Activated B cell treated with CpG ODN at 0.5 μM for 24 hours (primary cell): ENCODE measurements at regions of chr19 and their contacts with region 1.

Region 1: GRCh38 chr19:4576016-4576933 is 16.8 kb upstream of the SEMA6B start:
- DNase-seq: peak; percentile 64
- ATAC-seq: peak; percentile 60
- H3K4me3 Mint-ChIP-seq: no peak overlapping the region
- H3K27ac Mint-ChIP-seq: no peak overlapping the region
- H3K4me1 Mint-ChIP-seq: peaks cover 3% of the 10 kb centered on the region
- H3K27me3 Mint-ChIP-seq: peaks cover 48% of the 10 kb centered on the region
- CTCF ChIP-seq: no peak

Region 2: DNA sequence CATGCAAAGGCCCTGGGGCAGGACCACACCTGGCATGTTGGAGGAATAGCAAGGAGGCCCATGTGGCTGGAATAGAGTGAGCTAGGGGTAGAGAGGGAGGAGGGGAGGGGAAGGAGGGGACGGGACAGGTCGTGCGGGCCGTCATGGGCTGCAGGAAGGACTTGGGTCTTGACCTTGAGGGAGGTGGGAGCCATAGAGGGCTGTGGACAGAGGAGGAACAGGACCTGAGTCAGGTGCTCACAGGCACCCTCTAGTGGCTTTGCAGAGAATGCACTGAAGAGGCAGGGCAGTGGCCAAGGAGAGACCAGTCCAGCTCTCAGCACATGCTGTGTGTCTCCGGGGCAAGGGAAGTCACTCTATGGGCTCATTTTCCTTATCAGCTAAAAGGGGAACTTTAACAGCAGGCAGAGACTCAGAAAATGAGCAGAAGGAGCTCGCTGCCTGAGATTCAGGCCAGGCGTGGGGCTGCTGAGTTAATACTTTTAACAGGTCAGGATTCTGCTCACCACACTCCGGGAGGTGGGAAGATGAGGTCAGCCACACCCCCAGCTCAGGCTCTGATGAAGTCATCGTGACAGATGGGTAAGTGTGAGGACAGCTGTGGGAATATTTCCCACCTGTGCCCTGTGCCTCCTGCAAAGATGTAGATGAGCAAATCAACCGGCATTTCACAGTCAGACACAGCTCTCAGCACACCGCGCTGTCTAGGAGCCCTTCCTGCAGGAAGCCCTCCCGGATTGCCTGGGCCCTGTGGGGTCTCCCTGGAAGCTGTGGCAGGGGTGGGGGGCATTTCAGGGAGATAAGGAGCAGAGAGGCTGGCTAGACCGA is 57.1 kb after region 1 on chr19:
- CTCF ChIA-PET with region 1: interaction called, 28 read pairs
- POLR2A ChIA-PET with region 1: interaction called, 4 read pairs
- intact Hi-C with region 1: loop called (anchors 1 kb)
- DNase-seq: peak; percentile 32
- ATAC-seq: peak; percentile 66
- H3K4me3 Mint-ChIP-seq: no peak overlapping the region
- H3K27ac Mint-ChIP-seq: peak overlapping the region; percentile 16
- H3K4me1 Mint-ChIP-seq: peaks cover 18% of the 10 kb centered on the region
- H3K27me3 Mint-ChIP-seq: peaks cover 5% of the 10 kb centered on the region
- CTCF ChIP-seq: no peak

Region 3: GRCh38 chr19:4669723-4670480 is 93.6 kb after region 1 on chr19 and contains the start of gene MYDGF:
- CTCF ChIA-PET with region 1: no interaction called
- POLR2A ChIA-PET with region 1: interaction called, 16 read pairs
- intact Hi-C with region 1: no loop called
- DNase-seq: peak; percentile 93
- ATAC-seq: peak; percentile 98
- H3K4me3 Mint-ChIP-seq: peak within 1 kb of the TSS; percentile 89
- H3K27ac Mint-ChIP-seq: peak within 1 kb of the TSS; percentile 77
- H3K4me1 Mint-ChIP-seq: peaks cover 18% of the 10 kb centered on the region
- H3K27me3 Mint-ChIP-seq: no peaks in the 10 kb centered on the region
- CTCF ChIP-seq: no peak
- total RNA-seq, gene MYDGF: 30.9 and 31.6 TPM in 2 replicates

Region 4: GRCh38 chr19:4861077-4861543 is 284.8 kb after region 1 on chr19:
- CTCF ChIA-PET with region 1: no interaction called
- POLR2A ChIA-PET with region 1: no interaction called
- intact Hi-C with region 1: no loop called
- DNase-seq: no peak
- ATAC-seq: no peak
- H3K4me3 Mint-ChIP-seq: no peak overlapping the region
- H3K27ac Mint-ChIP-seq: no peak overlapping the region
- H3K4me1 Mint-ChIP-seq: peaks cover 19% of the 10 kb centered on the region
- H3K27me3 Mint-ChIP-seq: no peaks in the 10 kb centered on the region
- CTCF ChIP-seq: no peak